Activated CD4-positive, alpha-beta memory T cell treated with anti-CD3 and anti-CD28 coated beads for 36 hours (primary cell): ENCODE measurements at regions of chrX and their contacts with region 1.

Region 1: DNA sequence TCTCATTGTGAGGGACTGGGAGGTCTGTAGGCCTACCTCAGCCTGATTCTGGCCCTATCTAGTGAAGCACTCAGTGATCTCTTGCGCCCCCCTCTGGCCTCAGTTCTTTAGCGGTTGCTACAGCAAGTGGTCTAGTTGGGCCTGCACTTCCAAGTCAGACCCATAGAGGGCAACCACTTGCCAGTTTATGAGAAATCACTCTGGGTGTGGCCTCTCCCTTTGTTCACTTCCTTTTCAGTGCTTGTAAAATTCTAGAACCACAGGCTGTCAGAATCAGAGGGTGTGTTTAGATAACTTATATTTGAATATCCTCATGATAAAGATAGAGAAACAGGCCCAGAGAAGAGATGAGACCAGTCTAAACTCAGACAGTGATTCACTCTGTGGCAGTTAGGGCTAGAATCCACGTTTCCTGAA is 60.9 kb upstream of the LAS1L start:
- DNase-seq: peak; percentile 95
- H3K4me3 Mint-ChIP-seq: peak overlapping the region; percentile 43
- H3K27ac Mint-ChIP-seq: peak overlapping the region; percentile 96
- H3K4me1 Mint-ChIP-seq: peaks cover 49% of the 10 kb centered on the region
- H3K27me3 Mint-ChIP-seq: no peaks in the 10 kb centered on the region

Region 2: DNA sequence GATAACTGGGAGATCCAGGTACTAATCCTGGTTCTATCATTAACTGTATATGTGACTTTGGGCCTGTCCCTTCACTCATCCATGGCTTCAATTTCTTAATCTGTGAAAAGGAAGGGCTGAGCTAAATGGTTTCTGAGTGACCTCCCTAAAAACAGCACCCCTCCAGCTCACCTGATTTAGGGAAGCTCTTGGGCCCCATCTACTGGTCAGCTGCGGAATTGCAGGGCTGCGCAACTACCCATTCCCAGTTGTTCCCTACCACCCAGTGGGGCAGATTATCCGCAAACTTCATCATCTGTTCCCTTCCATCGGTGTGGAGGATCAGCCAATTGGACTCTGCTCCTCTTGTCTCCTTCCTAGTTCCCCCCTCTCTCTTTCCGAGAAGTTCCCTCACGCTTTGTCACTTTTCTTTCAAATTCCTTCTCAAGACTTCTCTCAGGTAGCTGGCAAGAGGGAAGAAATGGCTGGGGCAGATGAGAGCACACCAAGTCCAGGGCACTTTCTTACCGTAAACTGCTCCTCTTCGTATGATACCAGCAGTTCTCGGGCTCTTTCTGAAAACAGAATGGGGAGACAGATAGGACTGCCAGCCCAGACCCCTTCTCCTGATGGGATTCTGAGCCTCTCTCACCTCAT is 66.6 kb before region 1 on chrX:
- CTCF ChIA-PET with region 1: no interaction called
- POLR2A ChIA-PET with region 1: no interaction called
- intact Hi-C with region 1: no loop called
- DNase-seq: peak; percentile 60
- H3K4me3 Mint-ChIP-seq: no peak overlapping the region
- H3K27ac Mint-ChIP-seq: no peak overlapping the region
- H3K4me1 Mint-ChIP-seq: peaks cover 18% of the 10 kb centered on the region
- H3K27me3 Mint-ChIP-seq: no peaks in the 10 kb centered on the region

Region 3: GRCh38 chrX:65607070-65607742 is 11.7 kb after region 1 on chrX:
- CTCF ChIA-PET with region 1: interaction called, 5 read pairs
- POLR2A ChIA-PET with region 1: interaction called, 13 read pairs
- intact Hi-C with region 1: loop called (anchors 1 kb)
- DNase-seq: peak; percentile 47
- H3K4me3 Mint-ChIP-seq: peak overlapping the region; percentile 20
- H3K27ac Mint-ChIP-seq: peak overlapping the region; percentile 82
- H3K4me1 Mint-ChIP-seq: peaks cover 64% of the 10 kb centered on the region
- H3K27me3 Mint-ChIP-seq: no peaks in the 10 kb centered on the region

Region 4: GRCh38 chrX:65697915-65698796 is 102.7 kb after region 1 on chrX:
- CTCF ChIA-PET with region 1: interaction called, 3 read pairs
- POLR2A ChIA-PET with region 1: interaction called, 3 read pairs
- intact Hi-C with region 1: loop called (anchors 1 kb)
- DNase-seq: peak; percentile 85
- H3K4me3 Mint-ChIP-seq: peak overlapping the region; percentile 46
- H3K27ac Mint-ChIP-seq: peak overlapping the region; percentile 91
- H3K4me1 Mint-ChIP-seq: peaks cover 90% of the 10 kb centered on the region
- H3K27me3 Mint-ChIP-seq: no peaks in the 10 kb centered on the region

Region 5: GRCh38 chrX:65723706-65724105 is 128.2 kb after region 1 on chrX:
- CTCF ChIA-PET with region 1: interaction called, 3 read pairs
- POLR2A ChIA-PET with region 1: no interaction called
- intact Hi-C with region 1: loop called (anchors 1 kb)
- DNase-seq: peak; percentile 62
- H3K4me3 Mint-ChIP-seq: peak overlapping the region; percentile 39
- H3K27ac Mint-ChIP-seq: peak overlapping the region; percentile 93
- H3K4me1 Mint-ChIP-seq: peaks cover 88% of the 10 kb centered on the region
- H3K27me3 Mint-ChIP-seq: no peaks in the 10 kb centered on the region

Region 6: GRCh38 chrX:65926095-65927019 is 330.9 kb after region 1 on chrX:
- CTCF ChIA-PET with region 1: no interaction called
- POLR2A ChIA-PET with region 1: no interaction called
- intact Hi-C with region 1: loop called (anchors 1 kb)
- DNase-seq: peak; percentile 60
- H3K4me3 Mint-ChIP-seq: no peak overlapping the region
- H3K27ac Mint-ChIP-seq: peak overlapping the region; percentile 72
- H3K4me1 Mint-ChIP-seq: peaks cover 41% of the 10 kb centered on the region
- H3K27me3 Mint-ChIP-seq: no peaks in the 10 kb centered on the region

Region 7: DNA sequence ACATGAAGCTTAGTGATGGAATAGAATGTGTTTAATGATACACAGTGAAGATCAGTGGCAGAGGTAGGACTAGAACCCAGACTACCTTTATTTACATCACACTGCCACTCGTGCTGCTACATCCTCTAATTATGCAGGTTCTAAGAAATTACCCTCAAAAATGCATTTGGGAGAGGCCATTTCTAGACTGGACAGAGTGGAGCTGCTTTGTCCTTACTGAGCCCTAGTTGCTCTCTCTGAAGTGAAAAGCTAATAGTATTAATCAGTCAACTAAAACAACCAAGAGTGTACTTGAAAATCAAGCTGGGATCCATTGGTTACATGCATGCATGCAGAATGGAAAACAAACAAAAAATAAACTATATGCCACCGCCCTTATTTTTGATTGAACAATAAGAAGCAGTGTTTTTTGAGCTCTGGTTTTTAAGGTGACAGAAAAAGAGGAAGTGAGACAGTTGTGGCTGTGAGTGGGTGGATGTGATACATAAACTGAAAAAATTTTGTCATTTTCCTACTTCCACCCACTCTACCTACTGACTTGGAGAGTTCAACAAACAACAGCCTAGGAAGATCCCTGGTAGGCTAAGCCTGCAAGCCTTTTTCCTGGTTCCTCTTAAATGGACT is 451.3 kb after region 1 on chrX:
- CTCF ChIA-PET with region 1: no interaction called
- POLR2A ChIA-PET with region 1: no interaction called
- intact Hi-C with region 1: loop called (anchors 2 kb)
- DNase-seq: peak; percentile 49
- H3K4me3 Mint-ChIP-seq: peak overlapping the region; percentile 33
- H3K27ac Mint-ChIP-seq: peak overlapping the region; percentile 93
- H3K4me1 Mint-ChIP-seq: peaks cover 33% of the 10 kb centered on the region
- H3K27me3 Mint-ChIP-seq: no peaks in the 10 kb centered on the region